Sciatic nerve (tissue), 2 donors: ENCODE measurements at regions of chr7 and their contacts with region 1.

Region 1: DNA sequence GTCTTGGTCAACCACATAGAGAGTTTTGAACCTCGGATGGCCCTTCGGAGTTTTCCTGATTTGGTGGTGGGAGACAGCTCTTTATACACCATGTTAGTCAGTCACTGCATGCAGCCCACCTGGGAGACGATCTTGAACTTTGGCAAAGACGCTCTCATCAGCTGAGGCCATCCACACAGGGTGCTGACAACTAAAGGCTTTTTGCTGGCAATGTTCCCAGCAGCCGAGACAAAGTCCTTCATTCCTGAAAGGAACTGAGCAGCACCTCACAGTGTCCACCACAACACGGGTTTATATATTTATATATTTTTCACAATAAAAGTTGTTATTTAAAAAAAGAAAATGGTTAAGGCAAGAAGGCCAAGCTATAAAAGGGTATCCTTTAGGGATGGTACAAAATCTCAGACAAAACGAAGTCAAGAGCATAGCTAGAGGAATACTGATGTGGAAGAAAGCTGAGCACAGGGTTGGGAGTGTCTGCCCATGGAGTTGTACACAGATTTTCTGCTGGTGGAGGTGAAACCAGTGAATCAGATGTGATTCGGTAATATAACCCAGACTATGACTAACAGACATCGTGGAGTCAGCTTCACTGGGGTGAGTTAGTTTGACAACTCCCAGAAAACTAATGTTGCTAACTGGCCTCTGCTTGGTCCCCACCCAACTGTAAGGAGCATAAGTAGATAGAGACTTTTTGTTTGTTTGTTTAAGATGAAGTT is 27.4 kb upstream of the CAPZA2 start:
- DNase-seq: no peak
- ATAC-seq: no peak

Region 2: DNA sequence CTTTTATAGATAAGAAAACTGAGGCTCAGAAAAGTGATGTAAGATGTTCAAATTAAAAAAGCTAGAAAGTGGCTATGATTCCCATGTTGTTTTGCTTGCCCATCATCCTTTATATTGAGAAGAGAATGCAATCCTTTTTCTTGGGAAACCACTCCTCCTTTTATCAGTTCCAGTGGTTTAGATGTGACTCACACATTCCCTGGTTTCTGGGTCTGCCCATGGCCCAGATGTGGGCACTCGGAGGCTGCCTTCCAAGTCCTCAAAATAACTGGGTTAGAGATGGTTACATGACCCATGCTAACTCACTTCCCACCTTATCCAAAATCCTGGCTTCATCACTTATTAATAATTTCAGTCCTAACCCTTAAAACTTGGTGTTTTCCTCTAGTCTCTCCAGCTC is 1363.1 kb before region 1 on chr7:
- intact Hi-C with region 1: loop called (anchors 5 kb)
- DNase-seq: no peak
- ATAC-seq: no peak